ENCODE measurements at regions of chr6 and their contacts with region 1.

Region 1: GRCh38 chr6:130076512-130076911 is 58.1 kb downstream of the L3MBTL3 start:
- DNase-seq: peak; percentile 9
- ATAC-seq: no peak
- H3K4me3 ChIP-seq: no peak overlapping the region
- H3K4me3 Mint-ChIP-seq: no peak overlapping the region
- H3K27ac ChIP-seq: no peak overlapping the region
- H3K27ac Mint-ChIP-seq: no peak overlapping the region
- H3K4me1 ChIP-seq: peaks cover 0 to 10% of the 10 kb centered on the region in 2 donors
- H3K4me1 Mint-ChIP-seq: peaks cover 22% of the 10 kb centered on the region
- H3K27me3 ChIP-seq: no peaks in the 10 kb centered on the region
- H3K27me3 Mint-ChIP-seq: no peaks in the 10 kb centered on the region
- CTCF ChIP-seq: peak; percentile 30

Region 2: GRCh38 chr6:130037207-130037811 is 39.2 kb before region 1 on chr6:
- CTCF ChIA-PET with region 1: interaction called, 3 read pairs
- POLR2A ChIA-PET with region 1: no interaction called
- intact Hi-C with region 1: loop called (anchors 5 kb)
- DNase-seq: peak; percentile 25
- ATAC-seq: no peak
- H3K4me3 ChIP-seq: no peak overlapping the region
- H3K4me3 Mint-ChIP-seq: no peak overlapping the region
- H3K27ac ChIP-seq: no peak overlapping the region
- H3K27ac Mint-ChIP-seq: no peak overlapping the region
- H3K4me1 ChIP-seq: peaks cover 2 to 10% of the 10 kb centered on the region in 2 donors
- H3K4me1 Mint-ChIP-seq: peaks cover 66% of the 10 kb centered on the region
- H3K27me3 ChIP-seq: no peaks in the 10 kb centered on the region
- H3K27me3 Mint-ChIP-seq: no peaks in the 10 kb centered on the region
- CTCF ChIP-seq: peak; percentile 79

Region 3: GRCh38 chr6:130115036-130115435 is 38.5 kb after region 1 on chr6:
- CTCF ChIA-PET with region 1: no interaction called
- POLR2A ChIA-PET with region 1: no interaction called
- intact Hi-C with region 1: loop called (anchors 5 kb)
- DNase-seq: peak; percentile 77
- ATAC-seq: peak; percentile 90
- H3K4me3 ChIP-seq: peak overlapping the region in 2 of 5 experiments; percentile 9 to 20
- H3K4me3 Mint-ChIP-seq: peak overlapping the region; percentile 82
- H3K27ac ChIP-seq: peak overlapping the region; percentile 88 to 91
- H3K27ac Mint-ChIP-seq: peak overlapping the region; percentile 94
- H3K4me1 ChIP-seq: peaks cover 49 to 55% of the 10 kb centered on the region in 2 donors
- H3K4me1 Mint-ChIP-seq: peaks cover 75% of the 10 kb centered on the region
- H3K27me3 ChIP-seq: no peaks in the 10 kb centered on the region
- H3K27me3 Mint-ChIP-seq: no peaks in the 10 kb centered on the region
- CTCF ChIP-seq: no peak

Region 4: GRCh38 chr6:130282234-130282995 is 205.9 kb after region 1 on chr6:
- CTCF ChIA-PET with region 1: interaction called, 16 read pairs
- POLR2A ChIA-PET with region 1: no interaction called
- intact Hi-C with region 1: loop called (anchors 5 kb)
- DNase-seq: no peak
- ATAC-seq: peak; percentile 31
- H3K4me3 ChIP-seq: no peak overlapping the region
- H3K4me3 Mint-ChIP-seq: no peak overlapping the region
- H3K27ac ChIP-seq: no peak overlapping the region
- H3K27ac Mint-ChIP-seq: no peak overlapping the region
- H3K4me1 ChIP-seq: no peaks in the 10 kb centered on the region
- H3K4me1 Mint-ChIP-seq: peaks cover 9% of the 10 kb centered on the region
- H3K27me3 ChIP-seq: no peaks in the 10 kb centered on the region
- H3K27me3 Mint-ChIP-seq: no peaks in the 10 kb centered on the region
- CTCF ChIP-seq: peak; percentile 45

Measured in B cell (primary cell).